OCI-LY7 (cell line): ENCODE measurements at regions of chr6 and their contacts with region 1.

Region 1: GRCh38 chr6:6610031-6610591 is 21.6 kb downstream of the LY86 start:
- DNase-seq: peak; percentile 85
- H3K4me3 ChIP-seq: peak overlapping the region; percentile 36
- H3K27ac ChIP-seq: peak overlapping the region; percentile 72
- H3K4me1 ChIP-seq: peaks cover 31% of the 10 kb centered on the region
- CTCF ChIP-seq: no peak

Region 2: DNA sequence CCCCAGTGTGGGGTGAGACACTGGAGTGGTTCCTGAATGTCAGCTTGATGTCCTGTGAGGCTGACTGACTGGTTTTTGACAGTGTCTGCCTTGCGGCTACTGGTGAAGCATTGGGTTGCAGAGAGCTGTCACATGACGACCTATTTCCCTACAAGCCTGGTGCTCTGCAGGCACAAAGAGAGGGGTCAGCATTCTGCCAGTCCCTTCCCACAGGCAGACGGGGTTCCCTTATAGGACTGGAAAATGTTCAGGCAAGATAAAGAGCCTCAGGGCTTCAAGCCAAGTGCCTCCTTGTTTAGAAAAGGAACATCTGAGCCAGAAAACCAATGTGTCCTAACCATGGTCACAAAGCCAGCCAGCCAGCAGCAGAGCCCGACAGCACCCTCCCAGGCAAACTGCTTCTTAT is 10.6 kb before region 1 on chr6:
- CTCF ChIA-PET with region 1: no interaction called
- POLR2A ChIA-PET with region 1: interaction called, 25 read pairs
- intact Hi-C with region 1: no loop called
- DNase-seq: no peak
- H3K4me3 ChIP-seq: no peak overlapping the region
- H3K27ac ChIP-seq: no peak overlapping the region
- H3K4me1 ChIP-seq: peaks cover 4% of the 10 kb centered on the region
- CTCF ChIP-seq: no peak